Naive thymus-derived CD8-positive, alpha-beta T cell (primary cell): ENCODE measurements at regions of chr16 and their contacts with region 1.

Region 1: GRCh38 chr16:28211712-28212534 is at the start of gene XPO6:
- DNase-seq: peak; percentile 94 to 100 (median 98)
- ATAC-seq: peak; percentile 83
- H3K4me3 Mint-ChIP-seq: peak within 1 kb of the TSS; percentile 80 to 97 (median 90)
- H3K27ac Mint-ChIP-seq: peak within 1 kb of the TSS; percentile 77 to 98 (median 90)
- H3K4me1 Mint-ChIP-seq: peaks cover 17 to 45% (median 36%) of the 10 kb centered on the region in 4 donors
- H3K27me3 Mint-ChIP-seq: no peaks in the 10 kb centered on the region
- polyA plus RNA-seq, gene XPO6: 90.2 to 109 (median 96.4) TPM

Region 2: GRCh38 chr16:28149011-28149888 is 62.7 kb before region 1 on chr16:
- POLR2A ChIA-PET with region 1: interaction called, 60 read pairs
- DNase-seq: peak; percentile 17 to 74 (median 43)
- ATAC-seq: peak; percentile 90 to 92
- H3K4me3 Mint-ChIP-seq: peak overlapping the region; percentile 9 to 81 (median 66)
- H3K27ac Mint-ChIP-seq: peak overlapping the region; percentile 87 to 99 (median 94)
- H3K4me1 Mint-ChIP-seq: peaks cover 41 to 80% (median 77%) of the 10 kb centered on the region in 4 donors
- H3K27me3 Mint-ChIP-seq: no peaks in the 10 kb centered on the region

Region 3: GRCh38 chr16:28181515-28181914 is 30.4 kb before region 1 on chr16:
- POLR2A ChIA-PET with region 1: interaction called, 30 read pairs
- DNase-seq: no peak
- ATAC-seq: peak; percentile 13 to 20
- H3K4me3 Mint-ChIP-seq: peak overlapping the region; percentile 48 to 78 (median 61)
- H3K27ac Mint-ChIP-seq: peak overlapping the region; percentile 85 to 97 (median 93)
- H3K4me1 Mint-ChIP-seq: peaks cover 46 to 95% (median 87%) of the 10 kb centered on the region in 4 donors
- H3K27me3 Mint-ChIP-seq: no peaks in the 10 kb centered on the region

Region 4: DNA sequence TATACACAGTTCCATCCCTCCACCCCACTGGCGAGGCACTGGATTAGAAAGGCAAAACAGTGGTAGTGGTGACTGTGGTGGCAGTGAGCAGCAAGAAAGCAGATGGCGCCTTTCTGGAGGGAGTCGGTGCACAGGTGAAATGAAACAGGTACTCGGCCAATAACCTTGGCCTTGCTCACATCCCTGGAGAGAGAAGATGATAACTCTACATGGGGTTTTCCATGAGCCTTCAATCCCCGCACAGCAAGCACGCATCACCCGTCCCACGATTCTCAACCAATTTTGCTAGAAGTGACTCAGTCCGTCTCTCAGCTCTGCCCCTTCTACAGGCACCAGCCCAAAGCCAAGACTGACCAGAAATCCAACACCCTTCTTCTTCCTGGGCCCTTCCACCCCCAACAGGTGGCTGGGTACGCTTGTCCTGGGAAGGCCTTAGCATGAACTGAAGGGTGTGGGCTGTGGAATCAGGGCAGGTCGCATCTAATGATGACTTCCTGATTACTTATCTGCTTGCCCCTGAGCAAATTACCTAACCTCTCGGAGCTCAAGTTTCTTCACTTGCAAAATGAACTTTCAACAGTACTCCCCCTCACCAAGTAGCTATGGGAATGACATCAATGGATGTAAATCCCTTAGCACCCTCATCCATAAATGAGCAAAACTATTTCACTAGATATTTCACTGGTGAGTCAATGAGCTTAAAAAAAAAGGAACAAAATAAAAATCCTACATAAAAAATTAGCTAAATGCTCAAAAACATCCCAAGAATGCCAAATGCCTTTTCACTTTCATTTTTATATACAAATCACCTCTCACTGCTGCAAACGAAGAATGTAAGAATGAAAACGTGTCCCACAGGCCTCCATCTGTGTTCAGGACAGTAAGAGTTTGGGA is 18.1 kb before region 1 on chr16:
- POLR2A ChIA-PET with region 1: interaction called, 93 read pairs
- DNase-seq: peak in 4 of 10 donors; percentile 13 to 36 (median 31)
- ATAC-seq: peak; percentile 3 to 4
- H3K4me3 Mint-ChIP-seq: peak overlapping the region; percentile 57 to 88 (median 84)
- H3K27ac Mint-ChIP-seq: peak overlapping the region; percentile 95 to 100 (median 98)
- H3K4me1 Mint-ChIP-seq: peaks cover 42 to 89% (median 82%) of the 10 kb centered on the region in 4 donors
- H3K27me3 Mint-ChIP-seq: no peaks in the 10 kb centered on the region

Region 5: DNA sequence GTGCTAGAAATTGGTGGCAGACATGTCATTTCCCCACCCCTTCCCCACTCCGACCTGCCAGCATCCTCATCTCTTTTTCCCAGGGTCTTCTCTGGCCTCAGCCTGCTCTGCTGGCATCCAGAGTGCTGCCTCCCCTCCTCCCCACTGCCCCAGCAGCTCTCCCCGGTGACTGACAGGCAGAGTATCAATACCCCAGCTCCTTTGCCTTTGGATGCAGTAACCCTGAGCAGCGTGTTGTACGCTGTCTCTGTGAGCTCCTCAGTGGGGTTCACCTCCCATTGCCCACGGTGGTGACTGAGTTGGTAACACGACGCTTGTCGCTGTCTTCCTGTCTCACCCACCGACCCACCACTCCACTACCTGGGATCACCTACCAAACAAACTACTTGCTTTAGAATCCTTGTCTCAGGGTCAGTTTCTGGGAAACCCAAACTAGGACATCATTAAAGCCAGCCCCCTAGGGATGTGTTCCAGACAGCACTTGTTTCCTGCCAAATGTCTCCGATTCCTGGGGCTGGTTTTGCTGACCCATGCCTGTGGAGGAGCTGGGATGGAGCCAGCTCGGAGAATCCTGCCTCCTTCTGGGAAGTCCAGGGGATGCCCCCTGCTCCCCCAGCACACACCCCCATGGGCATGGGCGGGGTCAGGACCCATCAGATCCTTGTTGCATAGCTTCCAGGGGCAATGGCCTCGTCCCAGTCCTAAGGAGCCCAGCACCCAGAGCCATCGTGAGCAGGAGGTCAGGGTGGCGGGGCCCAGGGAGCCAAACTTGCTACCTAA is 72.1 kb after region 1 on chr16:
- POLR2A ChIA-PET with region 1: no interaction called
- DNase-seq: no peak
- ATAC-seq: no peak
- H3K4me3 Mint-ChIP-seq: no peak overlapping the region
- H3K27ac Mint-ChIP-seq: peak overlapping the region in 8 of 10 donors; percentile 35 to 79 (median 48)
- H3K4me1 Mint-ChIP-seq: peaks cover 10 to 32% (median 26%) of the 10 kb centered on the region in 4 donors
- H3K27me3 Mint-ChIP-seq: no peaks in the 10 kb centered on the region